IMR-90 (cell line): ENCODE measurements at regions of chr16 and their contacts with region 1.

Region 1: GRCh38 chr16:495127-495748 is 32.3 kb upstream of the CAPN15 start:
- DNase-seq: peak; percentile 27
- ATAC-seq: peak; percentile 82
- H3K4me3 ChIP-seq: no peak overlapping the region
- H3K27ac ChIP-seq: no peak overlapping the region
- H3K4me1 ChIP-seq: no peaks in the 10 kb centered on the region; the same call in 1 of the 2 replicates
- H3K27me3 ChIP-seq: no peaks in the 10 kb centered on the region
- CTCF ChIP-seq: peak; percentile 46
- POLR2A ChIP-seq: no peak
- RAD21 ChIP-seq: peak; percentile 51

Region 2: GRCh38 chr16:361872-362701 is 133.2 kb before region 1 on chr16:
- CTCF ChIA-PET with region 1: no interaction called
- POLR2A ChIA-PET with region 1: no interaction called
- dilution Hi-C with region 1: no loop called
- in situ Hi-C with region 1: no loop called
- intact Hi-C with region 1: no loop called
- DNase-seq: peak; percentile 61
- ATAC-seq: peak; percentile 84
- H3K4me3 ChIP-seq: no peak overlapping the region
- H3K27ac ChIP-seq: no peak overlapping the region
- H3K4me1 ChIP-seq: no peaks in the 10 kb centered on the region
- H3K27me3 ChIP-seq: no peaks in the 10 kb centered on the region
- CTCF ChIP-seq: peak; percentile 77
- POLR2A ChIP-seq: no peak
- RAD21 ChIP-seq: peak; percentile 89

Region 3: GRCh38 chr16:425082-425718 is 70.0 kb before region 1 on chr16 and contains the start of gene RAB11FIP3:
- CTCF ChIA-PET with region 1: no interaction called
- POLR2A ChIA-PET with region 1: no interaction called
- dilution Hi-C with region 1: no loop called
- in situ Hi-C with region 1: no loop called
- intact Hi-C with region 1: loop called (anchors 2 kb)
- DNase-seq: peak; percentile 77
- ATAC-seq: peak; percentile 86
- H3K4me3 ChIP-seq: peak within 1 kb of the TSS; percentile 65
- H3K27ac ChIP-seq: peak within 1 kb of the TSS; percentile 69
- H3K4me1 ChIP-seq: peaks cover 13% of the 10 kb centered on the region
- H3K27me3 ChIP-seq: no peaks in the 10 kb centered on the region
- CTCF ChIP-seq: peak; percentile 10; the same call in 1 of the 2 replicates
- POLR2A ChIP-seq: peak; percentile 62
- RAD21 ChIP-seq: no peak
- total RNA-seq, gene RAB11FIP3: 7.5 TPM in 2 replicates

Region 4: GRCh38 chr16:636206-637080 is 141.2 kb after region 1 on chr16 and contains the start of gene METTL26:
- CTCF ChIA-PET with region 1: no interaction called
- POLR2A ChIA-PET with region 1: no interaction called
- dilution Hi-C with region 1: no loop called
- in situ Hi-C with region 1: no loop called
- intact Hi-C with region 1: no loop called
- DNase-seq: peak; percentile 91
- ATAC-seq: peak; percentile 86
- H3K4me3 ChIP-seq: peak within 1 kb of the TSS; percentile 97
- H3K27ac ChIP-seq: peak within 1 kb of the TSS; percentile 94
- H3K4me1 ChIP-seq: peaks cover 11% of the 10 kb centered on the region
- H3K27me3 ChIP-seq: no peaks in the 10 kb centered on the region
- CTCF ChIP-seq: peak; percentile 12; the same call in 1 of the 2 replicates
- POLR2A ChIP-seq: peak; percentile 69; the same call in 1 of the 2 replicates
- RAD21 ChIP-seq: peak; percentile 22
- total RNA-seq, gene METTL26: 40.8 and 46.8 TPM in 2 replicates